Lower leg skin (tissue), 4 donors: ENCODE measurements at regions of chr1 and their contacts with region 1.

Region 1: DNA sequence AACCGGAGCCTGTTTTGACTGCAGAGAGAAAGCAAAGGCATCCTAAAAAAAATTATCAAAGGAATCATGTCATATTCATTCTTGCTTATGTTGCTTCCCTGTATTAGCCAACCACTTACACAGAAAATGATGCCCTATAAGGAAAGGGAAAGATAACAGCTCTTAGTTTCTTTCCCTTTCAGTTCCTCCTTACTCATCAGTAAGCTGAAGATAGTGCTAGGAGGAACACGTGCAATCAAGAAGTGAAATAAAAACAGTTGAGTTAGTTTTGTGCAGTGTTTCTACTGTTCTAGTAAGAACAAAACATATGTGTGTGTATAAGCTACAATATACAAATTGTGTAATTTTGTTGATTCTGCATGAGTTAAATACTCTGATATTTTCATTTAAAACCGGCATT is 45.3 kb upstream of the MTF2 start:
- DNase-seq: no peak
- H3K4me3 ChIP-seq: no peak overlapping the region
- CTCF ChIP-seq: no peak
- POLR2A ChIP-seq: no peak

Region 2: DNA sequence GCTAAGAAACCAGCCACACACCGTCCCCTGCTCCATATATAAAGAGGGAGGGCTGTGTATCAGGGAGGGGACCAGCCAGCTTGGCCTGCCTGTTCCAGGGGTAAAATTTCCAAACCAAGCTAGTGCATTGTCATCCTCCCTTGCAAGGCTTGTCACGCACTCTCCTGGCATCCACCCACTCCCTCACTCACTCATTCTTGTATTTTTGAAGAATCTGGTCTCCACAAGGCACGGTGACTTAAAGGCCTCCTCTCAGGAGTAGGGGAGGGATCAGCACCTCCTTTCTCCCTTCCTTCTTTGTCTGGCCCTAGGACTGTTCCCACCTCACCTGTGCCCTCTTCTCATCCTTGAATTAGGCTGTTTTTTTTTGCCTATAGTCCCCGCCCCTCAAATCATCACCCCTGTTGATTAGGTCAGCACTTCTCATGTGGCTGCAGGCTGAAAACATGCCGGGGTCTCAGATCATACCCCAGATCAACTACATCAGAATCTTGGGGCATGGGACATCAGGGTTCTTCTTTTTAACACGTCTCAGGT is 1082.2 kb after region 1 on chr1:
- intact Hi-C with region 1: loop called (anchors 5 kb)
- DNase-seq: peak in 1 of 2 donors; percentile 91
- H3K4me3 ChIP-seq: no peak overlapping the region
- CTCF ChIP-seq: no peak
- POLR2A ChIP-seq: no peak